ENCODE measurements at regions of chr5 and their contacts with region 1.

Region 1: GRCh38 chr5:62403434-62404250 is at the start of gene DIMT1:
- DNase-seq: peak; percentile 79 to 95 (median 90)
- ATAC-seq: peak; percentile 95 to 96
- H3K4me3 Mint-ChIP-seq: peak within 1 kb of the TSS; percentile 94 to 99 (median 99)
- H3K27ac Mint-ChIP-seq: peak within 1 kb of the TSS; percentile 91 to 98 (median 97)
- H3K4me1 Mint-ChIP-seq: peaks cover 14 to 33% (median 27%) of the 10 kb centered on the region in 4 donors
- H3K27me3 Mint-ChIP-seq: no peaks in the 10 kb centered on the region
- polyA plus RNA-seq, gene DIMT1: 44.4 to 50.9 (median 46.3) TPM

Region 2: DNA sequence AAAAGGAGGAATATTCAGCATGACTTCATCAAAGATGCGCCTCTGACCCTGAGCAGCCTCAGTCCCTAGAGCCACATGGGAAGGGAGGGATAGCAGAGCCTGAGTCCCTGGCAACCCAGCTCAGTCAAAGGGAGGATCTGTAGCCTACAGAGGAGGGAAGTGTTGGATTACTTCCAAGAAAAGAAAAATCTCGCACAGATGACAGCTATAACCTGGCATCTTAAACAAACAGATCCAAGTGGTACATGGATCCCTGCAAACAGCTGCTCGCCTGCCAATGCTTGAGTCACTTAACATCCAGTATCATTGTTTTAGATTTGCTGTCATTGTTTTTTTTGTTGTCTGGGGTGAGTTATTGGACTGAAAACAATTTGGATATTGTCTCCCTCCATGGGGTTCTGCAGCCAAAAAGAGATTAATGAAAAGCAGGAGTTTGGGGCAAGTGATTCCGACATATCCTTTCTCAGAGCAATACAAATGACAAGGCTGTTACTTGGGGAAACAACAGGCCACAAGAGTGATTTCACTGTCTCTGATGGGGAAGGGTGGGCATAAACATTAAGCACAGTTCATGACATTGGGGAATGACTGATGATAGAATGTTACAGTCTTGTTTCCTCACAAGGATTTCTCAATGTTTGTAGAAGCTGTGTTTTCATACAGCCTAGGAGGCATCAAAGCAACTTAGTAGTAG is 251.1 kb before region 1 on chr5:
- POLR2A ChIA-PET with region 1: no interaction called
- DNase-seq: no peak
- ATAC-seq: no peak
- H3K4me3 Mint-ChIP-seq: no peak overlapping the region
- H3K27ac Mint-ChIP-seq: no peak overlapping the region
- H3K4me1 Mint-ChIP-seq: no peaks in the 10 kb centered on the region
- H3K27me3 Mint-ChIP-seq: peaks cover 6 to 25% (median 8%) of the 10 kb centered on the region in 5 donors

Region 3: DNA sequence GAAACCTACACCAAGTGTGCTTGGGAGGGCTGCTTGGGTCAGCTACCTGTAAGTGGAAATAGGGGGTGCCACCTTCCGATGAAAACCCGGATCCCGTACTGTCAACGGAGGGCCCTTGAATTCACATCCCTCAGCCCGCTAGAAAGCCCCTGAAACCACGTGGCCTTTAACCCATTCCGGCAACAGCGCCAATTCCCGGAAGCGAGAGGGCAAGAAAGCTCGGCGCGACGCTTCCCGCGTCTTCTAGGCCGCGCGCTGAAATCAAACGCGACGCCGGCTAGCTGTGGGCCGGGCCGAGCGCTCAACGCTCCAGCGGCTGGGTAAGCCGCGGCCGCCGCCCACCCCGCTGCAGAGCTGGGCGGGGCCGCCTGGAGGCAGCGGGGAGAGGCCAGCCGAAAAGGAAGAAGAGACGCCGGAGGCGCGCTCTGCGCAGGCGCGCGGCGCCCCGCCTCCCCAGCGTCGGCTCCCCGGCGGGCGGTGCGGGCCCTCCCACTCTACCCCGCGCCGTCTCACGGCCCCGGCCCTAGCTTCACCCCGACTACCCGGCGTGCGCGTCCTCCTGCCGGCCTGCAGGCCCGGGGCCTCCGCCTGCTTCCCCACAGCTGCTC is 97.8 kb before region 1 on chr5 and contains the start of gene KIF2A:
- POLR2A ChIA-PET with region 1: interaction called, 10 read pairs
- DNase-seq: peak; percentile 90 to 96 (median 92)
- ATAC-seq: peak; percentile 83 to 84
- H3K4me3 Mint-ChIP-seq: peak within 1 kb of the TSS; percentile 89 to 99 (median 97)
- H3K27ac Mint-ChIP-seq: peak within 1 kb of the TSS; percentile 93 to 99 (median 99)
- H3K4me1 Mint-ChIP-seq: peaks cover 28 to 55% (median 50%) of the 10 kb centered on the region in 4 donors
- H3K27me3 Mint-ChIP-seq: no peaks in the 10 kb centered on the region
- polyA plus RNA-seq, gene KIF2A: 151 to 180 (median 173) TPM

Region 4: DNA sequence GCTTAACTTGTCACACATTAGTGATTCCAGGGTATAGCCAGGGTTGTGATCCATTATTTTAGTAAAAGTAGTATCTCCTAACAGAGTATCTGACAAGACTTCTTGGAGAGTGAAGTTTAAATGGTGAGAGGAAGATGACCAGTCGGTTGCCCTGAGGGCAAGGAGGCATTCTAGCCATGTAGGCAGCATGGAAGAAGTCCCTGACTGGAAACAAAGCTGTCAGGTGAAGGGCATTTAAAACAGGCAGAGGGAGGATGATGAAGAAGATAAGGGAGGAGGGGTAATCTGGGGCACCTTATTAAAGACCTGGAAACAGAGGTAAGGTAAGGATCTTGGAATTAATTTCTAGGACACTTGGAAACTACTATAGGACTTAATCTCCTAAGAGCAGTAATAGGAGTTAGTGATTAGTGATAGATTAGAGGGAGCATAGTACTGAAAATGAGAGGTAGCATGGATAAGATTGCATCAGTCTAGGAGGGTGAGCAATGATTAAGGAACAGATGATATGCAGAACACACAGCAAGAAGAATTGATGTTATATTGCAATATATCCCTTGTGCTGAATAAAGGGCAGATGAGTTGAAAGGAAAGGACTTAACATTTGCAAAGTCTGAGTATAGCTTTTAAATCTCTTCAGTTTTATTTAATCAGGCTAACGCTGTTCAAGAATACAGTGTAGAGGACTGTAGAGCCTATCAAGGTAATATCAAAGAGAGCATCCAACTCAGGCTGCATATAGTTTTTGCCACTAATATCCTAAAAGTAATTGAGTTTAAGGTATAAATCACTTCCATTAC is 88.1 kb before region 1 on chr5:
- POLR2A ChIA-PET with region 1: interaction called, 11 read pairs
- DNase-seq: no peak
- ATAC-seq: no peak
- H3K4me3 Mint-ChIP-seq: peak overlapping the region in 8 of 10 donors; percentile 14 to 71 (median 26)
- H3K27ac Mint-ChIP-seq: peak overlapping the region in 9 of 10 donors; percentile 3 to 73 (median 49)
- H3K4me1 Mint-ChIP-seq: peaks cover 40 to 95% (median 89%) of the 10 kb centered on the region in 4 donors
- H3K27me3 Mint-ChIP-seq: no peaks in the 10 kb centered on the region